Ascending aorta (tissue), 2 donors: ENCODE measurements at regions of chr19 and their contacts with region 1.

Region 1: GRCh38 chr19:20565321-20566018 is at the start of gene ZNF737:
- DNase-seq: peak; percentile 78 to 98
- H3K4me3 ChIP-seq: peak within 1 kb of the TSS; percentile 77 to 91
- H3K27ac ChIP-seq: peak within 1 kb of the TSS; percentile 82 to 90
- H3K4me1 ChIP-seq: peaks cover 0 to 2% of the 10 kb centered on the region in 2 donors
- H3K27me3 ChIP-seq: no peaks in the 10 kb centered on the region
- CTCF ChIP-seq: peak; percentile 29 to 51 (median 37)
- total RNA-seq, gene ZNF737: 2.4 TPM

Region 2: DNA sequence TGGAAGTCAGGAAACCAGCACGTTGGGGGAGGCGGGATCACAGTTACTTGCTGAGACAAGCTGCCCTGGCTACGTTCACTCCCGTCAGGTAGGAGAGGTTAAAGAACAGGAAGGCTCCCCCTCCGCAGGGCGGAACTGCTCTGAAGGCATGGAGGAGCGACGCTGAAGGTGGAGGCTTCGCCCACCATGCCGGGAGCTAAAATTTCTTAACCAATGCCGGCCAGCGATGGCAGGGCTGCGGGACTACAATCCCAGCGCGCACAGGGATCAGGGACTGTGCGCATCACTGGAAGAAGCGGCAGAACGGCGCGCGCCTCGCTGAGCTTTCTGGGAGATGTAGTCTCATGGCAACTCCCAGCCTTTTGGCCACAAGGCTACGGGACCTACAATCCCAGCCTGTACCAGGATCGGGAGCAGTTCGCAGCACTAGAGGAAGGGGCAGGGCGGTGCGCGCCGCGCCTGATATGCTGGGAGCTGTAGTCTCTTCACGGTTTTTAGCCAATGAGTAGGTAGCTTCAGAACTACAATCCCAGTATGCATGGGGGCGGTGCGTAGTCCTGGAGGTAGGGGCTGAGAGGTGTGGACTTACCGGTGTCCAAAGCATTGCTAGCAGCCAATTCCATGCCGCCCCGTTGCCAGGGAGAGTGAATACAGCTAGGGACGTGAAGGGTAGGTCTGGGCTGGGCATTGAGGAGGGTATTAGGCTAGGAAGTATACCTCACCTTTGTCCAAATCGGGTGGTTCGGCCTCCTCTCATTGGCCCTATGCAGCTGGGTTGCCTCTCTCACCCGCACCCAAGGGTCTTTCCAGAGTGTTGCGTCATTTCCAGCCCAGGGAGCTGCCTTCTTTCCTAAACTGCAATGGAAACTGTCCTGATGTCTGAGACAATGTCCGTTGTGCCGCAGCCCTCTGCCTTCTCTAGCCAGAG is 513.4 kb before region 1 on chr19:
- intact Hi-C with region 1: loop called (anchors 5 kb)
- DNase-seq: peak; percentile 91 to 98
- H3K4me3 ChIP-seq: peak overlapping the region; percentile 74
- H3K27ac ChIP-seq: peak overlapping the region; percentile 75 to 76
- H3K4me1 ChIP-seq: no peaks in the 10 kb centered on the region
- H3K27me3 ChIP-seq: no peaks in the 10 kb centered on the region
- CTCF ChIP-seq: peak in 1 of 3 experiments; percentile 18

Region 3: DNA sequence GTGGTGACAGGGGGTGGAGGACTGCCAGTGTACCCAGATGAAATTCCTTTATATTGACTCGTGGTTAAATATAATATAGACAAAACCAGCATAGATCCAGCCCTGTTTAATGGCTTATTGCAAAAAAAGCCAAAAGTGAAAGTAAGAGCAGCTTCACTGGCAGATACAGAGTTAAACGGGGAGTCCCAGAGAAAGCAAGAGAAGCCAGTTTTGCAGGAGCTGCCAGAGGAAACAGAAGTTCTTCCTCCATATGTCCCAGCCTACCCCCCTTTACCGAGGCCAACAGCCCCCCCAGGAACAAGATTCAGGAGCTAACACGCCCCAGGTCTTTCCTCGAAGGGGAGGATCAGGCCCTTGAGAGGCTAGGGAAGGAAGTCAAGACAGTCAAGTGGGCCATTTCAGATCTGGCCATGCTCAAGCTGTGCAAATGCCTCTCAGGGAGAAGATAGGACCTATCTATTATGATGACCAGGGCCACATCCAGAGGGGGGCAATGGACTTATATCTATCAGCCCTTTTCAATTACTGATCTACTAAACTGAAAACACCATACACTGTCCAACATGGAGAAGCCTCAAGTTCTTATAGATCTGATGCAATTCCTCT is 47.3 kb after region 1 on chr19:
- intact Hi-C with region 1: loop called (anchors 2 kb)
- DNase-seq: no peak
- H3K4me3 ChIP-seq: peak overlapping the region; percentile 53 to 69
- H3K27ac ChIP-seq: peak overlapping the region; percentile 68
- H3K4me1 ChIP-seq: peaks cover 0 to 4% of the 10 kb centered on the region in 2 donors
- H3K27me3 ChIP-seq: no peaks in the 10 kb centered on the region
- CTCF ChIP-seq: no peak

Region 4: GRCh38 chr19:20776083-20777076 is 210.9 kb after region 1 on chr19 and contains the start of gene ZNF66:
- intact Hi-C with region 1: loop called (anchors 5 kb)
- DNase-seq: peak; percentile 88 to 98
- H3K4me3 ChIP-seq: peak within 1 kb of the TSS; percentile 56 to 75
- H3K27ac ChIP-seq: peak within 1 kb of the TSS; percentile 4 to 34
- H3K4me1 ChIP-seq: peaks cover 0 to 2% of the 10 kb centered on the region in 2 donors
- H3K27me3 ChIP-seq: no peaks in the 10 kb centered on the region
- CTCF ChIP-seq: no peak
- total RNA-seq, gene ZNF66: 0.32 TPM

Region 5: GRCh38 chr19:20923077-20923871 is 357.8 kb after region 1 on chr19 and contains the start of gene ZNF85:
- intact Hi-C with region 1: loop called (anchors 10 kb)
- DNase-seq: peak; percentile 69 to 94
- H3K4me3 ChIP-seq: peak within 1 kb of the TSS; percentile 70 to 74
- H3K27ac ChIP-seq: peak within 1 kb of the TSS; percentile 72 to 90
- H3K4me1 ChIP-seq: peaks cover 0 to 4% of the 10 kb centered on the region in 2 donors
- H3K27me3 ChIP-seq: no peaks in the 10 kb centered on the region
- CTCF ChIP-seq: no peak
- total RNA-seq, gene ZNF85: 0.96 TPM